GM13976 (cell line): ENCODE measurements at regions of chr14 and their contacts with region 1.

Region 1: DNA sequence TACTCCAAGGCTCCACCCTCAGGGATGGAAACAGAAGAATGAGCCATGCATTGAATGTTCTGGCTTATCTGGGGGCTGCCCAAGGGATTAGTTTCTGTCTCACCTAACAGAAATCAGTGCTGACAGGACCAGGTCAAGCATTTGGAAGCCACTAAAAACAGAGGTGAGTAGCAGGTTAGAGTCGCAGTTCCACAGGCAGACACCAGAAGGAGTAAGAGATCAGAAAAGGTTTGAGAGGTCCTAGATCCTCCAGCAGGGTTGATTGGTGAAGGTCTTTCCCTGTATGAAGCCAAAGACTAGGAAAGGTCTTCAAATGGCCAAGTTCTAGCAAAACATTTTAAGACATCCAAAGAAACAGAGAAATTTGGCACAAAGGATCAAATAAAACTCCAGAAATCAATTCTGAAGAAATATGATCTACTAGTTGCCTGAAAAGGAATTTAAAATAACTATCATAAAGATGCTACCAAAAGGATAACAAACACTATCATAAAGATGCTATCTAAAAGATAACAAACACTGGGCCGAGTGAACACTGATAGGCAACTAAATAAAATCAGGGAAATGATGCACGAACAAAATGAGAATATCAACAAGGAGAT is 19.5 kb upstream of the TTC9 start:
- DNase-seq: peak; percentile 52
- CTCF ChIP-seq: peak; percentile 68

Region 2: DNA sequence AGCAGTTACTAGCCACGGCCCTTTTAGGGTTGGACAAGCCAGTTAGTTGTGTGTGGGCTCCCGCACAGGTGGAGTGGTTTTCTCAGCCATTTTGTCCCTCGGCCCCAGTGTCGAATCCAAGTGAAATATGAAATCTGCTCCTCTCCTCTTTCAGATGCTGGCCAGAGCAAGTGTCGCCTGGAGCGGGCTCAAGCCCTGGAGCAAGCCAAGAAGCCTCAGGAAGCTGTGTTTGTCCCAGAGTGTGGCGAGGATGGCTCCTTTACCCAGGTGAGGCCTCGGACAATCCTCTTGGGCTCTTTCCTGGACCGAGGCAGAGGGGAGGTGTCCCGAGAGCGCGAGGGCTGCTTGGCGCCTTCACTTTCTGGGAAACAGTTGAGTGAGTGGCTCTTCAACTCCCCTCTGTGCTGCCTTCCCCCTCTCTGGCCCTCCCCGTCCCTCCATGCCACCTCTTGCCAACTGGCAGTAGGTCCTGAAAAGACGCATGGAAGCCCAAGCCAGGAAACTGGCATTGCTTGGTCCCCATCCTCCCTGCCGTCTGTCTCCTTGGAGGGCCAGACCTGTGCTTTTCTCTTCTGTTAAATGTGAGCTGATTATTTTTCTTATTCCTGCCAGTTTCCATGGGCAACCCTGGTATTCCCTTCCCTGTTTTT is 668.8 kb before region 1 on chr14:
- in situ Hi-C with region 1: no loop called
- DNase-seq: no peak
- CTCF ChIP-seq: no peak

Region 3: DNA sequence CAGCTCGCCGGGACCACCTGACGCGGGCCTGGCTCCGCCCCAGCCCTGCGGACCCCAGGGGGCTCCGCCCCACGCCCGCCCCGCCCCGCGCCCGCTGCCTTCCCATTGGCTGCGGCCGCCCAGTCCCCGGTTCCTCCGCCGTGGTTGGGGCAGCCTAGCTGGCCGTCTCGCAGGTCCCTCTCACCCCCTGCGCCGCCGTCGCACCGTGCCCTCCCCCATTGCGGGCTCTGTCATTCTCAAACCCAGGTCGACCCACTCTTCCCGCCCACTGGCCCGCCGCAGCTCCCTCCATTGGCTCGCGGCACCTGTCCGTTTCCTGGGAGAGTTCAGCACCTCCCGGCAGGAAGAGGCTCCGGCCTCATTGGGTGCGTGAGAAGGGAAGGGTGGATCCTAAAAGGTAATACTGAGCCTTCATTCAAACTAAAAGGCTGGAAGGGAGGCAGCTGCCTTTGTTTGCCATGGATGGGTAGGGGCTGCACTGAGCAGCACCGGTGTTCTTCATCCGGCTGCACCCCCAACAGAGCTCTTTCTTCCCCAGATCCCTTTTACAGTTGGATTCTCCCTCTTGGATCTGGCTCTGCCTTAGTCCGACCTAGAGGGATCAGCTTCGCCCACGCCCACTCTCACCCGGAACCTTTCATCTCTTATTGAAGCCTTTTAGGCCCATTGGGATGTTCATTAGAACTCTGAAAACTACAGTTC is 187.5 kb after region 1 on chr14:
- in situ Hi-C with region 1: loop called (anchors 10 kb)
- DNase-seq: peak; percentile 98
- CTCF ChIP-seq: no peak

Region 4: DNA sequence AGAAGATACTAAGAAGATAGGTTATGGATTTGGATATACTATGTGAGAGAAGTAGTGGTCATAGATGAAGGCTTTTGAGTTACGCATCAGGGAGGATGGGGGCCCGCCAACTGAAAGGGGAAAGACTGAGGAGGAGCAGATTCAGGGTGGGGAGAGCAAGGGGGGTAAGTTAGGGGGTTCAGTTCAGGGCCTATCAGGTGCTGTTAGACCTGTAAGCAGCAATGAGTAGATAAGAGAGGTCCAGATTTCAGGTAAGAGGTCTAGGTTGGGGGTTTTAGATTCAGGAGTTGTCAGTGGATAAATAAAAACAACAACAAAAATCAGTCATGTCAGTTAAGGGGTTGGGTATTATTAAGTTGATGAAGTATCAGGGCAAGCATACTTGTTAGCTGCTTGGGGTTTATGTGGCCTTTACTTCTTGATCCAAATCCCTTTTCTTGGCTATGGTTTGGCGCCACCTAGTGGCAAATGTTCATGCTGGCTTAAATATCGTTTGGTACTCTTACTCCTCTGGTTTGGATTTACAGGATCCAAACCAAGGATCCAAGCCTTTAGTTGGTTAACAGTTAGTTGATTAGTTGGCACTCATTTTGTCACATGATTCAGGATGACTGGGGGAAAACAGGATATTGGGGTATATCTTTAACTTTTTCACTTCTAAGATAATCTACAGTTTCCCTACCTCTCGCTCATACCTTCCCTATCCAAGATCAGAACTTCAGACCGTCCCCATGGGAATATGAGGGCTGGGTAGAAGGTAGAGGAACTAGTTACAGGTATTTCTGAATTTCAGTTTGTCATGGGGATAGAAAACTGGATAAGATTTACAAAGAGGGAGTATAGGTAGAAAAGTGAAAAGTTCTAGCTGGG is 350.1 kb after region 1 on chr14:
- in situ Hi-C with region 1: loop called (anchors 10 kb)
- DNase-seq: peak; percentile 56
- CTCF ChIP-seq: peak; percentile 91